HEK293 (cell line): ENCODE measurements at regions of chr11 and their contacts with region 1.

Region 1: GRCh38 chr11:62394825-62395538 is 23.9 kb upstream of the SCGB1A1 start:
- H3K4me3 ChIP-seq: no peak overlapping the region
- H3K27ac ChIP-seq: no peak overlapping the region
- H3K4me1 ChIP-seq: no peaks in the 10 kb centered on the region
- CTCF ChIP-seq: no peak

Region 2: DNA sequence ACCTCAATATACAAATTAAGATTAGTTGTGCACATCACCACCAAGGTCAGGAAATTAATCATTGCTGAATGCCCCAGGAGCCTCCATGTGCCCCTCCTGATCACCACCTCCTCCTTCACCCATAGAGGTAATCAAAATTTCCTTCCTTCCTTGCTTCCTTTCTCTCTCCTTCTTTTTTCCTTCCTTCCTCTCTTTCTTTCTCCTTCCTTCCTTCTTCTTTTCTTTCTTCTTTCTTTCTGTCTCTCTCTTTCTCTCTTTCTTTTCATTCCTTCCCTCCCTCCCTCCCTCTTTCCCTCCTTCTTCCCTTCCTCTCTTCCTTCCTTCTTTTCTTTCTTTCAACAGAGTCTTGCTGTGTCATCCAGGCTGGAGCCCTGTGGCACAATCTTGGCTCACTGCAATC is 359.7 kb before region 1 on chr11:
- CTCF ChIA-PET with region 1: no interaction called
- POLR2A ChIA-PET with region 1: no interaction called
- H3K4me3 ChIP-seq: no peak overlapping the region
- H3K27ac ChIP-seq: no peak overlapping the region
- H3K4me1 ChIP-seq: no peaks in the 10 kb centered on the region
- CTCF ChIP-seq: no peak

Region 3: DNA sequence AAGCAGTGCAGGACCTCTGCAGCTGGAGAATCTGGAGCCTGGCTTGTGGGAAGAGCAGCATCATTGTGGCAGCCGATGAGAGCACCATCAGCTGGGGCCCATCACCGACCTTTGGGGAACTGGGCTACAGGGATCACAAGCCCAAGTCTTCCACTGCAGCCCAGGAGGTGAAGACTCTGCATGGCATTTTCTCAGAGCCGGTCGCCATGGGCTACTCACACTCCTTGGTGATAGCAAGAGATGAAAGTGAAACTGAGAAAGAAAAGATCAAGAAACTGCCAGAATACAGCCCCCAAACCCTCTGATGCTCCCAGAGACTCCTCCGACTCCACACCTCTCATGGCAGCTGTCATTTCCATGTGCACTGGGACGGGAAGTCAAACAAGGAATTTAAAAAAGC is 22.1 kb before region 1 on chr11:
- CTCF ChIA-PET with region 1: interaction called, 12 read pairs
- POLR2A ChIA-PET with region 1: no interaction called
- H3K4me3 ChIP-seq: no peak overlapping the region
- H3K27ac ChIP-seq: no peak overlapping the region
- H3K4me1 ChIP-seq: no peaks in the 10 kb centered on the region
- CTCF ChIP-seq: no peak

Region 4: GRCh38 chr11:62411524-62411923 is 16.5 kb after region 1 on chr11:
- CTCF ChIA-PET with region 1: interaction called, 19 read pairs
- POLR2A ChIA-PET with region 1: interaction called, 4 read pairs
- H3K4me3 ChIP-seq: no peak overlapping the region
- H3K27ac ChIP-seq: no peak overlapping the region
- H3K4me1 ChIP-seq: no peaks in the 10 kb centered on the region
- CTCF ChIP-seq: no peak

Region 5: DNA sequence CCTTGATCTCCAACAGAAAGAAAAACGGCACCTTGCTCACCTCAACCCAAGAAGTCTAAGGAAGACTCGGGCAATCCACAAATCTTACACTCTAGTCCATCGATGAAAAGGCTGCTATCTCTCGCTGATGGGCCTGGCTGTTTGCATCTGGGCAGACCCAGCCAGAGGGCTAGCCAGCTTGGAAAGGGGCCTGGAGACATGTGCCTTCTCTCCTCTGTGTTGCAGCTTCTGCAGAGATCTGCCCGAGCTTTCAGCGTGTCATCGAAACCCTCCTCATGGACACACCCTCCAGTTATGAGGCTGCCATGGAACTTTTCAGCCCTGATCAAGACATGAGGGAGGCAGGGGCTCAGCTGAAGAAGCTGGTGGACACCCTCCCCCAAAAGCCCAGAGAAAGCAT is 27.0 kb after region 1 on chr11:
- CTCF ChIA-PET with region 1: interaction called, 36 read pairs
- POLR2A ChIA-PET with region 1: interaction called, 4 read pairs
- H3K4me3 ChIP-seq: no peak overlapping the region
- H3K27ac ChIP-seq: no peak overlapping the region
- H3K4me1 ChIP-seq: peaks cover 3% of the 10 kb centered on the region
- CTCF ChIP-seq: no peak

Region 6: GRCh38 chr11:62556108-62556871 is 161.3 kb after region 1 on chr11:
- CTCF ChIA-PET with region 1: interaction called, 22 read pairs
- POLR2A ChIA-PET with region 1: interaction called, 11 read pairs
- H3K4me3 ChIP-seq: no peak overlapping the region
- H3K27ac ChIP-seq: peak overlapping the region; percentile 53; the same call in 1 of the 2 replicates
- H3K4me1 ChIP-seq: peaks cover 6% of the 10 kb centered on the region; the same call in 1 of the 2 replicates
- CTCF ChIP-seq: no peak

Region 7: DNA sequence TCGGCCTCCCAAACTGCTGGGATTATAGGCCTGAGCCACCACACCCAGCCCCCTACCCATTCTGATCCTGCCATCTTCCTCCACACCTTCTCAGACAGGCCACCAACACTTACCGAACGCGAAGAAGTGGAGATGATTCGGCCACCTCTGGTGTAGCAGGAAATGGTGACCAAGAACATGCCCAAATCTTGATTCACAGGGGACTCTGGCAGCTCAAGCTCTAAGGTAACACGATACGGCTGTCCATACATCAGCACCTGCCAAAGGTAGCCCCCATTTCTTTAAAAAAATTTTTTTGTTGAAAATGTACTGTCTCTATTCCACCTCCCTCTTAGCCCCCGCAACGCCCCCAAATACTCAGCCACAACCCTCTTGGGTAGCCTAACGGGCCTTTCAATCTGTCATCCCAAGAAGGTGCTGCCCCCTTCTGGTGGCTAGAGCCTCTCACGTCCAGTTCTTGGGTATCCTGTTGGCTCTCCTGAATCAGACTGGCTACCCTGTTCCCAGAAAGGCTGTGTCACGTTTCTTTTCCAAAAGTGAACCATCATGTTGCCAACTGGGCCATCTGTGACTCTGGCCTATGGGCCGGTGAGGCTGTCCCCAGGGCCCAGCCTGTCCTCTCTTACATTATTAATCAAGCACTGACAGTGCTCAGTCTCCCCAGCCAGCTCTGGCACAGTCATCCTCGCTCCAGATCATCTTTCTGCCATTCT is 299.6 kb after region 1 on chr11:
- CTCF ChIA-PET with region 1: interaction called, 15 read pairs
- POLR2A ChIA-PET with region 1: no interaction called
- H3K4me3 ChIP-seq: no peak overlapping the region
- H3K27ac ChIP-seq: no peak overlapping the region
- H3K4me1 ChIP-seq: no peaks in the 10 kb centered on the region
- CTCF ChIP-seq: peak; percentile 11; the same call in 1 of the 2 replicates